ENCODE measurements at regions of chr5 and their contacts with region 1.

Region 1: GRCh38 chr5:31825518-31826068 is 186.7 kb downstream of the PDZD2 start:
- DNase-seq: peak; percentile 34
- H3K4me3 ChIP-seq: no peak overlapping the region
- H3K27ac ChIP-seq: no peak overlapping the region
- H3K4me1 ChIP-seq: no peaks in the 10 kb centered on the region
- H3K27me3 ChIP-seq: no peaks in the 10 kb centered on the region
- CTCF ChIP-seq: peak; percentile 59

Region 2: GRCh38 chr5:32074401-32074800 is 248.8 kb after region 1 on chr5:
- intact Hi-C with region 1: loop called (anchors 5 kb)
- DNase-seq: no peak
- H3K4me3 ChIP-seq: no peak overlapping the region
- H3K27ac ChIP-seq: no peak overlapping the region
- H3K4me1 ChIP-seq: no peaks in the 10 kb centered on the region
- H3K27me3 ChIP-seq: no peaks in the 10 kb centered on the region
- CTCF ChIP-seq: no peak

Region 3: DNA sequence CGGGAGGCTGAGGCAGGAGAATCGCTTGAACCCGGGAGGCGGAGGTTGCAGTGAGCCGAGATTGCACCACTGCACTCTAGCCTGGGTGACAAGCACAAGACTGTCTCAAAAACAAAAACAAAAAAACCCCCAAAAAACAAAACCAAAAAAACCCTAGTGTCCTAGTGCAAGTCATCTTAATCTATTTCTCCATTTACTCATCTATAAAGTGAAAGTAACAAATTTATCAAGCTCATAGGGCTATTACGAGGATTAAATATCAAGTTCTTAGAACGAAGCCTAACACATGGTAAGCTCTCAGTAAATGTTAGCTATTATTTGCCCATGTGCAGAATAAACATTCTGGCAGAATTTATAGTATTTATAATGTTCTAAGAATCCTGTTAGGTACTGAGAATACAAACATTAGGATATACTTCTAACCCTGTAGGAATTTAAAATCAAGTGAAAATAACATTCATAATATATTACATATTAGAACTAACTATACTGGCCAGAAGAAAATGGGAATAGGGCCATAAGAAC is 303.5 kb after region 1 on chr5:
- intact Hi-C with region 1: no loop called
- DNase-seq: no peak
- H3K4me3 ChIP-seq: no peak overlapping the region
- H3K27ac ChIP-seq: no peak overlapping the region
- H3K4me1 ChIP-seq: no peaks in the 10 kb centered on the region
- H3K27me3 ChIP-seq: no peaks in the 10 kb centered on the region
- CTCF ChIP-seq: no peak

Measured in colonic mucosa (tissue), 4 donors.